Activated naive CD4-positive, alpha-beta T cell treated with anti-CD3 and anti-CD28 coated beads, Interleukin-2, amount 10 ng/mL, durations not matched to agents 7 days and 5 days (primary cell): ENCODE measurements at regions of chr10 and their contacts with region 1.

Region 1: DNA sequence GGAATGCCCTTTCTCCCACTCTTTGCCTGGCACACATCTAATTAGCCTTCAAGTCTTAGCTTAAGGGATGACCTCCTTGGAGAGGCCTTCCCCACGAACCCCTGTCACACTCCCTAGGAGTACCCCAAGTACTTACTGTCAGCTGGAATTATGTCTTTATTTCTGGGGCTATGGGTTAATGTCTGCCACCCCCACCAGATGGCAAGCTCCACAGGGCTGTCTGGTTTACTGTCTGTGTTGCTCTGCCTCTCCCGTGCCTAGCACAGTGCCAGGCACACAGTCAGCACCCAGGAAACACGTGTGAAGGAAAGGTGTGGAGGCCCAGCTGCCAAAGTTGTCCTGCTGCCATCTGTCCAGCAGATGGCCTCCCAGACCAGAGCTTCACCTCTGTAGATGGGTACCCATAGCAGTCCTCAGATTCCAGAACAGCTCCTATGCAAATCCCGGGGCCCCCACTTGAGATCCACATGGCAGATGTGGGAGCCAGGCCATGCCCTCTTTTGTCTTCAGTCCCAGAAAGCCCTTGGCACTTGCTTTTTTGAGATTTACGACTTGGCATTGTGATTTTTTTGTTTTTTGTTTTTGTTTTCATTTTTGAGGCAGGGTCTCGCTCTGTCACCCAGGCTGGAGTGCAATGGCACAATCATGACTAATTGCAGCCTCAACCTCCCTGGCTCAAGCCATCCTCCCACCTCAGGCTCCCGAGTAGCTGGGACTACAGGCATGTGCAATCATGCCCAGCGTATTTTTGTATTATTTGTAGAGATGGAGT is 17.2 kb upstream of the PALD1 start:
- DNase-seq: peak; percentile 67
- H3K4me3 Mint-ChIP-seq: no peak overlapping the region
- H3K27ac Mint-ChIP-seq: no peak overlapping the region
- H3K4me1 Mint-ChIP-seq: peaks cover 5% of the 10 kb centered on the region
- H3K27me3 Mint-ChIP-seq: peaks cover 72% of the 10 kb centered on the region

Region 2: GRCh38 chr10:70478191-70479164 is 17.1 kb after region 1 on chr10 and contains the start of gene PALD1:
- CTCF ChIA-PET with region 1: interaction called, 20 read pairs
- DNase-seq: peak; percentile 51
- H3K4me3 Mint-ChIP-seq: peak within 1 kb of the TSS; percentile 68
- H3K27ac Mint-ChIP-seq: peak within 1 kb of the TSS; percentile 42
- H3K4me1 Mint-ChIP-seq: peaks cover 42% of the 10 kb centered on the region
- H3K27me3 Mint-ChIP-seq: peaks cover 94% of the 10 kb centered on the region

Region 3: GRCh38 chr10:70493660-70494234 is 32.3 kb after region 1 on chr10:
- CTCF ChIA-PET with region 1: interaction called, 16 read pairs
- DNase-seq: no peak
- H3K4me3 Mint-ChIP-seq: no peak overlapping the region
- H3K27ac Mint-ChIP-seq: no peak overlapping the region
- H3K4me1 Mint-ChIP-seq: peaks cover 22% of the 10 kb centered on the region
- H3K27me3 Mint-ChIP-seq: peaks cover 40% of the 10 kb centered on the region

Region 4: GRCh38 chr10:70528726-70529362 is 67.4 kb after region 1 on chr10:
- CTCF ChIA-PET with region 1: interaction called, 11 read pairs
- DNase-seq: no peak
- H3K4me3 Mint-ChIP-seq: no peak overlapping the region
- H3K27ac Mint-ChIP-seq: no peak overlapping the region
- H3K4me1 Mint-ChIP-seq: no peaks in the 10 kb centered on the region
- H3K27me3 Mint-ChIP-seq: peaks cover 9% of the 10 kb centered on the region

Region 5: GRCh38 chr10:70540089-70540788 is 78.8 kb after region 1 on chr10:
- CTCF ChIA-PET with region 1: interaction called, 48 read pairs
- DNase-seq: peak; percentile 45
- H3K4me3 Mint-ChIP-seq: no peak overlapping the region
- H3K27ac Mint-ChIP-seq: no peak overlapping the region
- H3K4me1 Mint-ChIP-seq: no peaks in the 10 kb centered on the region
- H3K27me3 Mint-ChIP-seq: peaks cover 13% of the 10 kb centered on the region

Region 6: DNA sequence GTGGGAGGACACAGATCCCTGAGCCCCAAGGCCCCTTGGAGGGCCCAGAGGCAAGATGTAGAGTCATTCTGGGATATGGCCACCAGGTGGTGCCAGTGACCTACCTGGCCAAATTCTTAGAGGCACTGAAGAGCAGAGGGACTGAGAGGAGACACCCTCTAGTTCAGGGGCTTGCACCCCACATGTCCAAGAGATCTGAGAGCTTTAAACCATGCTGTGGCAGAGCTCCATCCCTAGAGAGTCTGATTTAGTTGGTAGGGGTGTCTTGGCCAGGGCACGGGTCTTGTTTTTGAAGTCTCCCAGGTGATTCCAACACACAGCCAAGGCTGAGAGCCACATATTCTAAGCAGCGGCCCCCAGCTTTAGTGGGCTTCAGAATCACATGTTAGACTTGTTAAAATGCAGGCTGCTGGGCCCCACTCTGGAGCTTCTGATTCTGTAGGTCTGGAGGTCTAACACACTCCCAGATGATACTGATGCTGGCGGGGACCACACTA is 88.6 kb after region 1 on chr10:
- CTCF ChIA-PET with region 1: interaction called, 22 read pairs
- DNase-seq: peak; percentile 83
- H3K4me3 Mint-ChIP-seq: no peak overlapping the region
- H3K27ac Mint-ChIP-seq: no peak overlapping the region
- H3K4me1 Mint-ChIP-seq: no peaks in the 10 kb centered on the region
- H3K27me3 Mint-ChIP-seq: peaks cover 7% of the 10 kb centered on the region